Dorsolateral prefrontal cortex (tissue), 120 donors: ENCODE measurements at regions of chr5 and their contacts with region 1.

Region 1: GRCh38 chr5:172006321-172007174 is at the start of gene FBXW11:
- DNase-seq: peak; percentile 95 to 98 (median 98)
- H3K4me3 ChIP-seq: peak within 1 kb of the TSS; percentile 72 to 100 (median 96)
- H3K27ac ChIP-seq: peak within 1 kb of the TSS; percentile 89 to 100 (median 98)
- H3K27me3 ChIP-seq: no peaks in the 10 kb centered on the region
- CTCF ChIP-seq: peak in 21 of 56 donors; percentile 5 to 53 (median 25)
- total RNA-seq, gene FBXW11: 88.4 to 136 (median 113) TPM

Region 2: GRCh38 chr5:171387345-171387969 is 619.1 kb before region 1 on chr5 and contains the start of gene NPM1:
- intact Hi-C with region 1: loop called in 1 of 2 experiments (anchors 2 kb)
- DNase-seq: peak; percentile 88 to 98 (median 94)
- H3K4me3 ChIP-seq: peak within 1 kb of the TSS; percentile 71 to 99 (median 93)
- H3K27ac ChIP-seq: peak within 1 kb of the TSS; percentile 52 to 96 (median 87)
- H3K27me3 ChIP-seq: no peaks in the 10 kb centered on the region
- CTCF ChIP-seq: peak in 8 of 56 donors; percentile 10 to 24 (median 16)
- total RNA-seq, gene NPM1: 162 to 384 (median 296) TPM

Region 3: DNA sequence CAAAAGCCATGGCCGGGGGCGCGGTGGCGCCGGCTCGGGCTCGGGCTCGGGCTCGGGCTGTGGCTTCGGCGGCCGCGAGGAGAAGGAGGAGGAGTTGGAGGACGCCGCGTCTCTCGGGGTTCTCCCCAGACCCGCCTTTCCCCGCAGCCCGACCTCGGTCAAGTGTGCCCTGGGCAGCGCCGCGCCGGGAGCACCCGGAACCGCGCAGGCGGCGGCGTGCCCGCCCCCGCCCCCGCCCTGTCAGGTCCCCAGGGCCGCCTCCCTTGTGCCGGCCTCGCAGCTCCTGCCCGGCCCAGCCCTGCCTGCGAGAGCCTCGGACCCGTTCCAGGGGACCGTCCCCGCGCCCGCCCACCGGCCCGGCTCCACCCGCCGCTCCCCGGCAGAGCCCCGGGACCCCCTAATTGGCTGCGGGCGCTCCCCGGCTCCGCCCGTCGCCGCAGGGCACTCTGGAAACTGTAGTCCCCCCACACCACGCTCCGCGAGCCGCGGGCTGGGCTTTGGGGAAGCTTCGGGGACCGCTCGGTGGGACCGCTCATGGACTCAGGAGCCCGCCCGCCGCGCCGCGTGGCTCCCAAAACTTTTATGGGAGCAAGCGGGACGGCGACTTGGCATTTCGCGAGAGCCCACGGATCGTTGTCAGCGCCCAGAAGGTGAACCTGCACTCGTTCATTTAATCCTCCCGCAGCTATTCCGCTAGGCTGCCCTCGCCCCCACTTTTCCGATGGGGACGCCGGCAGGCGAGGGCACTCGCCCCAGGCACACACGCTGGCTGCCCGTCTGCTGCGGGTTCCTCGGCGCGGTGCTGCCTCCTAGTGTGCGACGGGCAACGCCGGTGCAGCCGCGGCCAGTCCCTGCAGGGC is 181.7 kb after region 1 on chr5 and contains the start of gene STK10:
- intact Hi-C with region 1: loop called (anchors 5 kb)
- DNase-seq: peak; percentile 78 to 94 (median 86)
- H3K4me3 ChIP-seq: peak within 1 kb of the TSS; percentile 68 to 98 (median 91)
- H3K27ac ChIP-seq: peak within 1 kb of the TSS; percentile 29 to 94 (median 85)
- H3K27me3 ChIP-seq: no peaks in the 10 kb centered on the region
- CTCF ChIP-seq: peak; percentile 44 to 97 (median 89)
- total RNA-seq, gene STK10: 4.5 to 28.7 (median 16.7) TPM